ENCODE measurements at regions of chr2 and their contacts with region 1.

Region 1: DNA sequence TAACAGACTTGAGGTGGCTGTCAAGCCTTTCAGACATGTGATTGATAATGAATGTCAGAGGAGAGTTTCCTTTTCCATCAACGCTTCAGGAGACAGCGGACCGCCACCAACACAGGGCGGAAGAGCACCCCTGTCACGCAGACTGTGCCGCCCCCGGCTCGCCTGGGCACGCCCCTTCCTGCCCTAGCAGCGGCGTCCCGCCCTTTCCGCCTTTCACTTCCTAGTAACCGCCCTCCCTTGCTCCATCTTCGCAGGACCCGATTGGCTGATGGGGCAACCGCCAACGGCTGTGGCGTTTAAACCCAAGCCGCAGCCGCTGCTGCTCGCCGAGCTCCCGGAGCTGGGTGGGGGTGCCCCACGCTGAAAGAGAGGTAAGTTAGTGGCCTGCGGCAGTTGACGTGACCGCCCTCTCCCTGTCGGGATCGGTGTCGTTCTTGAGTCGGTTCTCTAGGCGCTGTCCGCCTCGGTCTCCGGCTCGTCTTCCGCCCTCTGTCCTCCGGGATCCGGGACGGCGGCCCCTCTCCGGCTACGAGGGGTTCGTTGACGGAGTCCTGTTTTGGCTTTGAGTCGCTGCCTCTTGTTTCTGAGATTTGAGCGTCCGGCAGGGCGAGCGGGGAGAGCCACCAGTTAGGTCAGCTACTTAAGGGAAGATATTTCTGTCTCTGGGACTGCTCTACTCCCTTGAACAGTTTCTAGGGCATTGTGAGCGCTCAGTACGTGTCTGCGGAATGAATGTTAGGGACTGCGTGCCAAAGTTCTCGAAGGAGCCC is at the start of gene SGO2:
- DNase-seq: peak; percentile 96
- H3K4me3 ChIP-seq: peak within 1 kb of the TSS; percentile 60 to 82 (median 68)
- H3K27ac ChIP-seq: peak within 1 kb of the TSS; percentile 54
- H3K4me1 ChIP-seq: peaks cover 20% of the 10 kb centered on the region
- H3K27me3 ChIP-seq: no peaks in the 10 kb centered on the region
- CTCF ChIP-seq: no peak
- total RNA-seq, gene SGO2: 2.0 to 12.3 TPM

Region 2: GRCh38 chr2:200509612-200510433 is 16.2 kb before region 1 on chr2 and contains the start of gene KCTD18:
- CTCF ChIA-PET with region 1: no interaction called
- dilution Hi-C with region 1: no loop called
- in situ Hi-C with region 1: no loop called
- intact Hi-C with region 1: loop called (anchors 1 kb)
- DNase-seq: peak; percentile 74
- H3K4me3 ChIP-seq: peak within 1 kb of the TSS; percentile 64 to 71 (median 69)
- H3K27ac ChIP-seq: peak within 1 kb of the TSS; percentile 43
- H3K4me1 ChIP-seq: peaks cover 5% of the 10 kb centered on the region
- H3K27me3 ChIP-seq: no peaks in the 10 kb centered on the region
- CTCF ChIP-seq: peak; percentile 53 to 74
- total RNA-seq, gene KCTD18: 16.4 to 19.5 TPM

Region 3: GRCh38 chr2:200585730-200586643 is 59.9 kb after region 1 on chr2 and contains the start of gene AOX1:
- CTCF ChIA-PET with region 1: no interaction called
- dilution Hi-C with region 1: no loop called
- in situ Hi-C with region 1: no loop called
- intact Hi-C with region 1: no loop called
- DNase-seq: peak; percentile 30
- H3K4me3 ChIP-seq: peak within 1 kb of the TSS; percentile 48 to 54 (median 49)
- H3K27ac ChIP-seq: no peak within 1 kb of the TSS
- H3K4me1 ChIP-seq: peaks cover 9% of the 10 kb centered on the region
- H3K27me3 ChIP-seq: no peaks in the 10 kb centered on the region
- CTCF ChIP-seq: no peak
- total RNA-seq, gene AOX1: 54.9 to 75.3 TPM

Measured in mammary epithelial cell (primary cell).